ENCODE measurements at regions of chr19 and their contacts with region 1.

Region 1: DNA sequence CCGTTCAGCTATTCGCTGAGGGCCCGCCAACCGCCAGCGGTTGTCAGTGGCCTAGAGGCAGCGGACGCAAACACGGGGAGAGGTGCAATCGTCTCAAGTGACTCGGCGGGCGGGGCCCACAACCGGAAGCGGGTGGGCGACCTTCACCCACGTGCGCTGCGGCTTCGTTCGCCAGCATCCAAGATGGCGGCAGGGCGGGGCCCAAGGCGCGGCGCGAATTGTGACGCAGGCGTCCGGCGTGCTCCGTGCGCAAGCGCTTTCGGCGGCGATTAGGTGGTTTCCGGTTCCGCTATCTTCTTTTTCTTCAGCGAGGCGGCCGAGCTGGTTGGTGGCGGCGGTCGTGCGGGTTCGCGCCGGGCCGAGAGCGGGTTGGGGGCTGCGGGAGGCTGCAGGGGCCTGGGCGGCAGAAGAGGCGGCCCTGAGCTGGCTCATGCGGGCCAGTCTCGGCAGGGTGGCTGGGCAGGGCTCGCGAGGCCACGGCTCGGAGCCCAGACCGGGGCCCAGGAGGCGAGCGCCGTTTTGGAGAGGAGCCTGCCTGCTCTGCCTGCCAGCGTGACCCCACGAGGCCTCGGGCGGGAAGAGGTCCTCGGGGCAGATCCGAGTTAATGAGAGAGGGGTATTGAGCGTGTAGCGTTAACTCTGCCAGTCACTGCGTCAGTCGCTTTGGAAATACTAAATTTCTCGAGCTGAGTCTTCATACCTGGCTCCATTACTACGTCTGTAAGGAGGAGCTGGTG is at the start of gene UBA52:
- DNase-seq: peak; percentile 98
- H3K4me3 ChIP-seq: peak within 1 kb of the TSS; percentile 66 to 91 (median 68)
- H3K27ac ChIP-seq: peak within 1 kb of the TSS; percentile 60
- H3K4me1 ChIP-seq: peaks cover 16% of the 10 kb centered on the region
- H3K27me3 ChIP-seq: no peaks in the 10 kb centered on the region
- CTCF ChIP-seq: no peak
- POLR2A ChIP-seq: peak; percentile 92
- total RNA-seq, gene UBA52: 1,218 and 1,221 TPM in 2 replicates

Region 2: DNA sequence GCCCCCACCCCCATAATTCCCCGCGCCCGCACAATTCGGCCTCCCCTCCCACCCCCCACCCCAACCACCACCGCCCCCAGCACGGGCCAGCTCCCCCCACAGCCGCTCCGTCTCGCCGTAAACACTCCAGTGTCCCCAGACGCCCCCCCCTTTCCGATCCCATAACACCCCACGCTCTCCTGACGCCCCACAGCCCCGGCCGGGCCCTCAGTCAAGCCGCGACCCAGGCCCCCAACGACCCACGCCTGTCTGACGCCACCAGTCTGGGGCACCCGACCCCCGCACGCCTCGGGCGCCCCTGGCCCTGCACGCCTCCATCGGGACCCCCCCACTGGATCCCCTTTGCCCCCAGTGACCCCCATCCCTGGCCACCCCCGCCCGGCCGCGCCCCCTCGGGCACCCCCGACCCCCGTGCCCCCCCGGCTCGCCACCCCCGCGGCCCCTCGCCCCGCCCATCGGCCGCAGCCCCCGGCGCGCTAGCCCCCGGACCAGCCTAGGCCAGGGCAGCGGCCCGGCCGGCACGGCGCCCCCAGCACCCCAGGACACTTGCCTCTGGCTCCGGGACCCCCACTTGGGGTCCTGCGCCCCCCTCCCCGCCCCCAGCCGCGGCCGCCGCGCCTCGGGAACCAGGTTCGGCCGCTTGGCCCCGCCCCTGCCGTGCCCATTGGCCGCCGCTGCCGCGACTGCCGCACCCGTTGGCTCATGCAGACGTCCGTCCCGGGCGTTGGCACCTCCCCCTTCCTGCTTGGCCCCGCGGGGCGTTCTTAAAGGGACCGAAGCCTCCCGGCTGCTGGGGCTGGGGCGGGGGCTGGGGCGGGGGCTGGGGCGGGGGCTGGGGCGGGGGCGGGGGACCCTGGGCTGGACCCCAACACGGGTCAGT is 28.6 kb before region 1 on chr19 and contains the start of gene FKBP8:
- CTCF ChIA-PET with region 1: interaction called, 3 read pairs
- POLR2A ChIA-PET with region 1: no interaction called
- dilution Hi-C with region 1: no loop called
- intact Hi-C with region 1: loop called (anchors 1 kb)
- DNase-seq: peak; percentile 87
- H3K4me3 ChIP-seq: peak within 1 kb of the TSS; percentile 61 to 85 (median 76)
- H3K27ac ChIP-seq: peak within 1 kb of the TSS; percentile 12
- H3K4me1 ChIP-seq: peaks cover 12% of the 10 kb centered on the region
- H3K27me3 ChIP-seq: no peaks in the 10 kb centered on the region
- CTCF ChIP-seq: no peak
- POLR2A ChIP-seq: no peak
- total RNA-seq, gene FKBP8: 150 and 164 TPM in 2 replicates

Region 3: DNA sequence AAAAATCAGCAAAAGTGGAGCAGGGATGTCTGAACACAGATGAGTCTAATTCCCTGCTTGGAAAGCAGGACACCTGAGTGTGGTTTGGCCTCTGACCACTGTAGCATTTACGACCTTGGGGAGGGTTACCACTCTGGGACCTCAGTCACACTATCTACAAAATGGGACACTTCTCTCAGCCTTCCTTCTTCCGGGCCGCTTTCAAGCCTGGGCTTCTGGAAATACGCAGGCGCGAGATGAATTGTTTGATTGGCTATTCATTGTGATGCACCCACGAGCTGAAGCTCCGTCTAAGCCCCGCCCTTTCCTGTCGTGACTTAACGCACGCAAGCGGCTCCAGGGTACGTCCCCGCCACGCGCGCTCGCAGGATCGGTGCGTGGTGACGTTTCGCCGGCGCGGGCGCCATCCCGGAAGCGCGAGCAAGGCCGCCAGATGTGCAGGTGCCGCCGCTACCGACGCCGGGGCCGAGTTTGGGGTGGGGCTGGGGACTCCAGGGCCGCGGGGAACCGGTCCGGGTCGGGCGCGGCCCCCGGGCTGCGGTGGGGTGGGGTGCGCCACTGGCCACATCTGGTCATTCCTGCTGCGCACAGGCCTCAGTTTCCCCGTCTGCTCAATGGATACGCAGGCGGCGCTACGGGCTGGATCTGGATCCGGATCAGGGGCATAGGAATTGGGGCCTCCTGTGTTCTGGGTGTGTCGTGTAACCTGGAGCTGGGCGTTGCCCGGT is 14.1 kb before region 1 on chr19 and contains the start of gene KXD1:
- CTCF ChIA-PET with region 1: interaction called, 8 read pairs
- POLR2A ChIA-PET with region 1: interaction called, 3 read pairs
- dilution Hi-C with region 1: no loop called
- intact Hi-C with region 1: loop called (anchors 1 kb)
- DNase-seq: peak; percentile 98
- H3K4me3 ChIP-seq: peak within 1 kb of the TSS; percentile 56 to 90 (median 81)
- H3K27ac ChIP-seq: peak within 1 kb of the TSS; percentile 84
- H3K4me1 ChIP-seq: peaks cover 28% of the 10 kb centered on the region
- H3K27me3 ChIP-seq: no peaks in the 10 kb centered on the region
- CTCF ChIP-seq: no peak
- POLR2A ChIP-seq: peak; percentile 66
- total RNA-seq, gene KXD1: 127 and 134 TPM in 2 replicates

Region 4: GRCh38 chr19:18588611-18589379 is 17.1 kb after region 1 on chr19 and contains the start of gene REX1BD:
- CTCF ChIA-PET with region 1: interaction called, 24 read pairs
- POLR2A ChIA-PET with region 1: interaction called, 5 read pairs
- dilution Hi-C with region 1: no loop called
- intact Hi-C with region 1: loop called (anchors 1 kb)
- DNase-seq: peak; percentile 85
- H3K4me3 ChIP-seq: peak within 1 kb of the TSS; percentile 32 to 78 (median 65)
- H3K27ac ChIP-seq: peak within 1 kb of the TSS; percentile 16
- H3K4me1 ChIP-seq: peaks cover 15% of the 10 kb centered on the region
- H3K27me3 ChIP-seq: no peaks in the 10 kb centered on the region
- CTCF ChIP-seq: peak; percentile 95 to 96
- POLR2A ChIP-seq: peak; percentile 87
- total RNA-seq, gene REX1BD: 64.0 and 64.4 TPM in 2 replicates

Region 5: DNA sequence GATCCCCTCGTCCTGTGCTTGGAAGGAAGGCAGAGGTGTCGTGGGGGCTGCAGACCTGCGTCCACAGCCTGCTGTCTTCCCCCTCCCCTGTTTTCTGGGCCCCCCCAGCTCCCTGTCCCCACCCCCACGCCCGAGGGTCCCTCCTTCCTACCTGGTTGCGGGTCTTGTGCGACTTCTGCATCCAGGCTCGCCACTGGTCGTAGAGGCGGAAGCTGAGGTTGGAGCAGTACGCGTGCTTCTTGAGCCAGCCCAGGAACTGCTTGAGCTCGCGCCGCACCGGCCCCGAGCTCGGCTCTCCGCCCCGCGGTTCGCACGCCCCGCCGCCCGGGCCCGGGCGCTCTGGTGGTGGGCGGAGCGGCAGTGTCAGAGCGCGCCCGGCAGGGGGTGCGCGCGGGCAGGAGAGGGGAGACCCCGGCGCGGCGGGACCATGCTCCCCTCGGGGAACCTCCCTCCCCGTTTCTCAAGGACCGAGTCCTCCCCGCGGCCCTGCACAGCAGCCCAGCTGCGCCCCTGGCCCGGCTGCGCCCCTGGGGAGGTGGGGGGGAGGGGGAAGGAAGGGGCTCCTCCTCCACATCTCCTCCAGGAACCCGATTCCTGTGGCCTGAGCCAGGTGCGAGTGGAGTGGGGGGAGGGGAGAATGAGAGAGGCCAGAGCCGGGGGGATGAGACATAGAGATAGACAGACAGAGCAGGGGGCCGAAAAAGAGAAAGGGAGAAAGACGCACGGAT is 22.5 kb after region 1 on chr19:
- CTCF ChIA-PET with region 1: interaction called, 24 read pairs
- POLR2A ChIA-PET with region 1: interaction called, 5 read pairs
- dilution Hi-C with region 1: no loop called
- intact Hi-C with region 1: no loop called
- DNase-seq: peak; percentile 80
- H3K4me3 ChIP-seq: peak overlapping the region in 2 of 3 experiments; percentile 14 to 25
- H3K27ac ChIP-seq: no peak overlapping the region
- H3K4me1 ChIP-seq: peaks cover 12% of the 10 kb centered on the region
- H3K27me3 ChIP-seq: no peaks in the 10 kb centered on the region
- CTCF ChIP-seq: peak; percentile 71 to 90
- POLR2A ChIP-seq: no peak

Measured in endothelial cell of umbilical vein (primary cell).